ENCODE measurements at regions of chr5 and their contacts with region 1.

Region 1: GRCh38 chr5:171323806-171324633 is 15.0 kb downstream of the TLX3 start:
- DNase-seq: peak in 1 of 2 experiments; percentile 64
- H3K4me3 ChIP-seq: peak overlapping the region; percentile 36; the same call in 1 of the 2 replicates
- H3K27ac ChIP-seq: no peak overlapping the region
- H3K4me1 ChIP-seq: peaks cover 6% of the 10 kb centered on the region
- H3K27me3 ChIP-seq: no peaks in the 10 kb centered on the region
- CTCF ChIP-seq: no peak

Region 2: GRCh38 chr5:171306781-171307591 is 17.0 kb before region 1 on chr5:
- CTCF ChIA-PET with region 1: interaction called, 15 read pairs
- POLR2A ChIA-PET with region 1: no interaction called
- intact Hi-C with region 1: no loop called
- DNase-seq: no peak
- H3K4me3 ChIP-seq: no peak overlapping the region
- H3K27ac ChIP-seq: no peak overlapping the region
- H3K4me1 ChIP-seq: no peaks in the 10 kb centered on the region
- H3K27me3 ChIP-seq: no peaks in the 10 kb centered on the region
- CTCF ChIP-seq: no peak

Region 3: GRCh38 chr5:171524466-171524865 is 200.4 kb after region 1 on chr5:
- CTCF ChIA-PET with region 1: no interaction called
- POLR2A ChIA-PET with region 1: no interaction called
- intact Hi-C with region 1: no loop called
- DNase-seq: no peak
- H3K4me3 ChIP-seq: no peak overlapping the region
- H3K27ac ChIP-seq: no peak overlapping the region
- H3K4me1 ChIP-seq: peaks cover 42% of the 10 kb centered on the region
- H3K27me3 ChIP-seq: no peaks in the 10 kb centered on the region
- CTCF ChIP-seq: no peak

Measured in PC-9 (cell line).